Activated T-helper 1 cell treated with anti-CD3 and anti-CD28 coated beads, Interleukin-12 subunit alpha, Interleukin-12 subunit beta, Interleukin-2, Interleukin-4 antibody, amounts not matched to agents 30 ng/mL and 10 ng/mL and 1 ng/mL, durations not matched to agents 14 hours and 24 hours and 36 hours (primary cell): ENCODE measurements at regions of chr3 and their contacts with region 1.

Region 1: GRCh38 chr3:38521391-38521987 is 25.3 kb downstream of the EXOG start:
- DNase-seq: peak; percentile 37
- H3K4me3 Mint-ChIP-seq: no peak overlapping the region
- H3K27ac Mint-ChIP-seq: no peak overlapping the region
- H3K4me1 Mint-ChIP-seq: peaks cover 33% of the 10 kb centered on the region
- H3K27me3 Mint-ChIP-seq: no peaks in the 10 kb centered on the region

Region 2: DNA sequence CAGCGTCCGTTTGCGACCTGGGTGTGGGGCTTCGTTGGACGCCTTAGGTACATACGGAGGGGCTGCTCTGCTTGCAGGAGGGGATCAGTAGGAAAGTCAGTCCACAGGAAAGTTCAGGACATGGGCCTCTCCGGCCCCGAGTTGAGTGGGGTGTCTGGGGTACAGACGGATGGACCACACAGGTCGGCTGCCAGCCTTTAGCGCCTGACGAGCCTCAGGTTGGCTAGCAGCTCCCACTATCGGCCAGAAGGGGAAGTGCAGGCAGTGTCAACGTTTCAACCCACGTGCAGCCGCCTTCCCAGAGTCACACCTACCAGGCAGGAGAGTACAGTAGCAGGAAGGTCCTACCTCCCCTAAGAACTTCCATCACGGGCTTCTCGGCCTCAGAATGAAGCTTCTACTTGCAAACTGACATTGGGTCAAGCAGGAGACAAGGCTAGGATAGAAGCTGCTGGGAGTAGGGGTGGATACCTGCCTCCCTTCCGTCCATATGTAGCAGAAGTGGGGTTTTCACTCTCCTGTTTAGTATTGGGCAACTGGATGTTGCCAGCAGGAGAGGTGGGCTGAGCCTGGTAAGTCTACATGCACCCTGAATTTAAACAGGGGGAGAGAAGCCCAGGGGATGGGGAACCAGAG is 129.8 kb after region 1 on chr3:
- intact Hi-C with region 1: loop called (anchors 1 kb)
- DNase-seq: peak; percentile 55
- H3K4me3 Mint-ChIP-seq: no peak overlapping the region
- H3K27ac Mint-ChIP-seq: no peak overlapping the region
- H3K4me1 Mint-ChIP-seq: peaks cover 12% of the 10 kb centered on the region
- H3K27me3 Mint-ChIP-seq: peaks cover 17% of the 10 kb centered on the region

Region 3: DNA sequence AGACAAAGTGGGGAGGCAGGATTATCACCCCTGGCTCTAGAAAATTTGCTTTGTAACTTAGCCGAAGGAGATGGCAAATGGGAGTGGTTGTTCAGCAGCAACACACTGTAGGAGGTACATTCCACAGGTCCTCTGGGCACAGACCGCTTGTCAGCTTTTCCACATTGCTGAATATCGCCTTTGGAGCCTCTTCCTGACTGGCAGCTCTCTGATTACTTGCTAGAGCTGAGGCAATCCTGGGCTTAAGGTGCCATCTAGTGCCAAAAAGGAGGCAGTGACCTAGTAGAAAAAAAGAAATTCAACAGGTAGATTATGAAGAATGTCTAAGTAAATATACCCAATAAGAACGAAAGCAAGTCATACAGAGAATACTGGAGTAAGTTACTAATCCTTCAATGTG is 141.1 kb after region 1 on chr3:
- intact Hi-C with region 1: loop called (anchors 1 kb)
- DNase-seq: no peak
- H3K4me3 Mint-ChIP-seq: no peak overlapping the region
- H3K27ac Mint-ChIP-seq: no peak overlapping the region
- H3K4me1 Mint-ChIP-seq: no peaks in the 10 kb centered on the region
- H3K27me3 Mint-ChIP-seq: peaks cover 33% of the 10 kb centered on the region

Region 4: DNA sequence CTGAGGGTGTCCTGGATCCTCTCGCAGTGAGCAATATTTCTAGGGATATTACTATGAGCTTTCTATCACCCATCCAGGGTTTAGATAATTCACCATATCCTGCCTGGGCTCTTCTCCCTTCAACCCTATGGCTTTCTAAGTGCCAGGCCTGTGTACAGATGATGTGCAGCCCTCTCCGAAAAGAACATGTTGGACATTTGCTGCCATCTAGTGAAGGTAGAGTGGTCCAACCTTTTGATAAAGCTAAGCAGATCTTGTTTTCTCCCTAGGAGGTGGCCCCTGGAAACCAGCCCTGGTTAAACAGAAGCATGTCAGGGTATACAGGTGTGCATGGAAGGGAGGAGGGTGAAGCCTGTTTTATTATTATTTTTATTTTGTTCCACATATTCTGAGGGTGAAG is 322.4 kb after region 1 on chr3:
- intact Hi-C with region 1: loop called (anchors 1 kb)
- DNase-seq: no peak
- H3K4me3 Mint-ChIP-seq: no peak overlapping the region
- H3K27ac Mint-ChIP-seq: no peak overlapping the region
- H3K4me1 Mint-ChIP-seq: no peaks in the 10 kb centered on the region
- H3K27me3 Mint-ChIP-seq: peaks cover 14% of the 10 kb centered on the region

Region 5: GRCh38 chr3:39000008-39000450 is 478.5 kb after region 1 on chr3:
- intact Hi-C with region 1: loop called (anchors 1 kb)
- DNase-seq: no peak
- H3K4me3 Mint-ChIP-seq: no peak overlapping the region
- H3K27ac Mint-ChIP-seq: no peak overlapping the region
- H3K4me1 Mint-ChIP-seq: no peaks in the 10 kb centered on the region
- H3K27me3 Mint-ChIP-seq: peaks cover 21% of the 10 kb centered on the region